ENCODE measurements at regions of chr6 and their contacts with region 1.

Region 1: DNA sequence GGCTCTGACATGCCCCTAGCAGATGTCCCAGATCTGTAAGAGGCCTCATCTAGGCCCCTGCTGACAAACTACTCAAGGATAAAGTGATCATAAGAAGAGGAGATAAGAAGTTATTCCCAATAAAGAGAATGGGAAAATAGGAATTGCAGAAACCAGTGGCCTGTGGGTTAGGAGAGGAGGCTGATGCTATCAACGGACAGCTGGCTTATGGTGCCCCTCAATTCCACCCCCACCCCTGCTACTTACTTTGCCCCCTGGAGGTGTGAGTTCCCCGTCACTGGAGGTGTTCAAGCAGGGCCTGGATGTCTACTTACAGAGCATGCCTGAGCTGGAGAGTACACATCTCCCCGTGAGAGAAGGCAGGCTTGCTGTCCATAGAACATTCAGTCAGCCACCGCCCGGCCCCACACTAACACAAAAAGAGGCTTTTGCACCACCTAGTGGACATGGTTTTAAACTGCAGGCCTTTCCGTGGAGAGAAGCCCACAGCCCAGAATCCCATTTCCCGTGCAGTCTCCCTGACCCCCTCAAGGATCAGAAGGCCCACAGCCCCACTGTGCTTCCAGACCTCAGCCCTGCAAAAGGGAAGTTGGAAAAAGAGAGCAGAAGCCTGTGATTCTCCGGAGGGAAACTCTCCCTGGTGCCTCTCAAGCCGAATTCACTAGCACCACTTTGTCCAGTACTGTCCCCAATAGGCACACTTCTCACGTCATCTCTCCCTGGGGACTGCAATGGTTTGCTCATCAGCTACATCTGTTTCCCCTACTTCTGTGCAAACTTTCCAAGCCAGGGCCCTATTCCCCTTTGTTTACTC is 23.8 kb upstream of the BNIP5 start:
- DNase-seq: peak; percentile 80
- H3K4me3 Mint-ChIP-seq: no peak overlapping the region
- H3K27ac Mint-ChIP-seq: no peak overlapping the region
- H3K4me1 Mint-ChIP-seq: peaks cover 28% of the 10 kb centered on the region
- H3K27me3 Mint-ChIP-seq: peaks cover 5% of the 10 kb centered on the region

Region 2: GRCh38 chr6:36340618-36341454 is 19.6 kb before region 1 on chr6:
- CTCF ChIA-PET with region 1: interaction called, 16 read pairs
- POLR2A ChIA-PET with region 1: no interaction called
- DNase-seq: peak; percentile 73
- H3K4me3 Mint-ChIP-seq: no peak overlapping the region
- H3K27ac Mint-ChIP-seq: no peak overlapping the region
- H3K4me1 Mint-ChIP-seq: peaks cover 11% of the 10 kb centered on the region
- H3K27me3 Mint-ChIP-seq: peaks cover 23% of the 10 kb centered on the region

Measured in activated CD4-positive, alpha-beta T cell treated with anti-CD3 and anti-CD28 coated beads, Interleukin-2, amount 10 ng/mL, durations not matched to agents 7 days and 5 days (primary cell).